ENCODE measurements at regions of chr7 and their contacts with region 1.

Region 1: GRCh38 chr7:116802746-116803152 is 59.6 kb upstream of the CAPZA2 start:
- DNase-seq: peak; percentile 14
- H3K4me3 Mint-ChIP-seq: no peak overlapping the region
- H3K27ac Mint-ChIP-seq: peak overlapping the region; percentile 40
- H3K4me1 Mint-ChIP-seq: peaks cover 12% of the 10 kb centered on the region
- H3K27me3 Mint-ChIP-seq: peaks cover 6% of the 10 kb centered on the region

Region 2: DNA sequence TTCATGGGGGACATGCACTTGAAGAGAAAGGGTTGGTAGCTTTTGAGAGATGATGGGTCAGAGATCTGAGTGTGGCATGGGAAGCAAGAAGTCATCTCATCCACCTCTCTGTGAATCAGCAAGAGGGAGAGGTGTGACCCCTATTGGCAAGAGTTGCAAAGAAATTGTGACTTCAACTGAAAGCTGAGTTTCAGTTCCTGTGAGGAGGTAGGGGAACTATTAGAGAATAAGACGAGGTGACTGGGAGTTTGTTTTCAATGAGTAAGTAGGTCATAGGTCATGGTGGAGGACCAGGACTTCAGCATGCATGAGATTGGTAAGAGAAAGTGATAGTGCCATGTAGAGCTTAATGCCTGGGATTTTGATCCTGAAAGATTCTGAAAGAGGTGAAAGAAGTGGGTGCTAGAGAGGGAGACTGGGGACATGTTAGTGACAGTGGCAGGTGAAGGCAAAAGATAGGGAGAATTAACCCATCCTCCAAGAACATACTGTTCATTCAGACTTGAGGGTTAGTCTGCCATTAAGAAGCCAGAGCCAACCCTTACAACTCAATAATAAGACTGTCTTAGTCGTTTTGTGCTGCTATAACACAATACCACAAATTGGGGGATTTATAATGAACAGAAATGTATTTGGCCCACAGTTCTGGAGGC is 15.8 kb before region 1 on chr7:
- intact Hi-C with region 1: loop called (anchors 1 kb)
- DNase-seq: no peak
- H3K4me3 Mint-ChIP-seq: no peak overlapping the region
- H3K27ac Mint-ChIP-seq: no peak overlapping the region
- H3K4me1 Mint-ChIP-seq: no peaks in the 10 kb centered on the region
- H3K27me3 Mint-ChIP-seq: peaks cover 2% of the 10 kb centered on the region